ENCODE measurements at regions of chr2 and their contacts with region 1.

Region 1: DNA sequence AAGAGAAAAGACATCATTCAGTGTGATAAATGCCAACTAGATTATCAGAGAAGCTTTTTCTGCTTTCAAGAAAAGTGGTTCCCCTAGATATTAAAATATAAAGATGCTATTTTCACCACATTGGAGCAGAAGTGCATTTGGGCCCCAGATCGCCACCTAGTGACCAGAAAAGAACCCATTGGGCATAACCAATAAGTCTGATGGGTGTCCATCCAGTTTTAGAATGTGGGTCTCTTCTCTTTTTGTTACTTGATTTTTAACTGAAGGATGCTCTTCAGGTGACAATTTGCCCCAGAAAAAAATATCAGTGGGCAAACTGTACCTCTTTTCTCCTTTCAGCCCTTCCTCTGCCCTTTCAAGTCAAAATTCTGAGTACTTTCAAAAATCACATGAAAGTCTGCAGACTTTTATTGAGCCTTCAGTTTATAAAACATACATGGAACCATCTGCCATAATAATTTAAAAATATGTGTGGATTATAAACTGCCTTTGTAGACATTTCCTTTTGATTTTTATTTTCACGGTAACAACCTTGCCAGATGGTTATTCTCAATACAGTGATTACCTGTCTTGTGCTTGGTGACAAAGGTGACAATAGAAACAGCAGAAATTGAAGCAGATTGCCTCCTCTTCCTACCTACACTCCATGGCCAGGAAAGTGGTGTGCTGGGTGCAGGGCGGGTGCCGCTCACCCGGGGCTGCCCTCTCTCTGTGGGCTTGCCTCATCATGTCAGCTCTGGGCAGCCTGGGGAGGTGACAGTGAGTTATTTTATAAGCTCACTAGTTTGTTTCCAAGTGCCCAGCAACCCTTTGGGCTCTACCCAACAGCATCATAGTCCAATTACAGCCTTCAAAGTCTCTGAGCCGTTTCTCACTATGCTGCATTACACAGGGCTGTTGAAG is 124.5 kb downstream of the DCDC2C start:
- DNase-seq: peak; percentile 4
- H3K4me3 ChIP-seq: no peak overlapping the region
- H3K27ac ChIP-seq: no peak overlapping the region
- H3K27me3 ChIP-seq: no peaks in the 10 kb centered on the region
- CTCF ChIP-seq: peak; percentile 78

Region 2: DNA sequence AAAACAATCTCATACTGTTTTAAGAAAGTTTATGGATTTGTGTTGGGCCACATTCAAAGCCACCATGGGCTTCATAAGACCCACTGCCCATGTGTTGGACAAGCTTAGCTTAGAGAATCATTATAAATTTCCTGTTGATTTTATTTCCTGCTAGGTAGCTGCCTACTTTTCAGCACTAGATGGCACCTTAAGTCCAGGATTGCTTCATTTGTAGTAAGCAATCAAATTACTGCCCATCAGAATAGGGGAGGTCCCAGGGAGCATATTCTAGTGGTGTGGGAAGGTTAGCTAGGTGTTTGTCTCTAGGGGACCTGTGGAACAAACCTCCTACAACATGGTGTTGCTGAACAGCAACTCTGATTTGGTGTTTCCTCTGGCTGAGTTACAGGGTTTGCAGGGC is 135.5 kb before region 1 on chr2:
- CTCF ChIA-PET with region 1: interaction called, 22 read pairs
- POLR2A ChIA-PET with region 1: no interaction called
- DNase-seq: no peak
- H3K4me3 ChIP-seq: no peak overlapping the region
- H3K27ac ChIP-seq: no peak overlapping the region
- H3K27me3 ChIP-seq: peaks cover 6% of the 10 kb centered on the region
- CTCF ChIP-seq: peak; percentile 59

Region 3: DNA sequence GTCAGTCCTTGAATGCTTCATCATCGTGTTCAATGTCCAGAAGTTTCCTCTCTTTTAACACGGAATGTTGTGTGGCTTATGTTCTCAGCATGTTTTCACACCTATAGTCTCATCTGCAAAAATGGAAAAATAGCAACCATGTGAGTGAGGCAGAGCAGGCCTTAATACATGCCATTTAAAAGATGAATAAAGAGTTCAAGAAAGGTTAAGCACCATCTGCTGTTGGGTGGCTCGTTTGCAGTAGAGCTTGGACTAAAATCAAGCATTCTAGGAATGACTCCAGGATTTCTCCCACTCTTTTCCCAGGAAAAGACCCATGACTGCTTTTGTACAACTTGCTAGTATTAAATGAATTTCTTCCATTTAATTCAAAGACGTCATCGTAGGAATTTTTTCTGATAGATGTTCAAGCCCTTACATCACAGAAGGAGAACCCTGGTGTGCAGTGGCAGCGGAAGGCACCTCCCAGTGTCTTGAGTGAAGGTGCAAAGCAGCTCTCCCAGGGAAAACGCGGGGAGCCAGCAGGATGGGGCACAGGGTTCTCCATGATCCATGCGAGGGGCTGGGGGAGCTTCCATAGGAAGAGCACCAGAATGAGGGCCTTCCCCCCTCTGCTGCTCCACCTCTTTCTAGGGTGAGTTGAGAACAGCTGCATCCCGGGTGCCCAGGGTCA is 115.0 kb before region 1 on chr2:
- CTCF ChIA-PET with region 1: interaction called, 14 read pairs
- POLR2A ChIA-PET with region 1: no interaction called
- DNase-seq: peak; percentile 29
- H3K4me3 ChIP-seq: no peak overlapping the region
- H3K27ac ChIP-seq: no peak overlapping the region
- H3K27me3 ChIP-seq: no peaks in the 10 kb centered on the region
- CTCF ChIP-seq: no peak

Region 4: GRCh38 chr2:3738454-3738853 is 89.5 kb before region 1 on chr2:
- CTCF ChIA-PET with region 1: interaction called, 72 read pairs
- POLR2A ChIA-PET with region 1: interaction called, 4 read pairs
- DNase-seq: no peak
- H3K4me3 ChIP-seq: no peak overlapping the region
- H3K27ac ChIP-seq: no peak overlapping the region
- H3K27me3 ChIP-seq: peaks cover 13% of the 10 kb centered on the region
- CTCF ChIP-seq: peak; percentile 67

Region 5: DNA sequence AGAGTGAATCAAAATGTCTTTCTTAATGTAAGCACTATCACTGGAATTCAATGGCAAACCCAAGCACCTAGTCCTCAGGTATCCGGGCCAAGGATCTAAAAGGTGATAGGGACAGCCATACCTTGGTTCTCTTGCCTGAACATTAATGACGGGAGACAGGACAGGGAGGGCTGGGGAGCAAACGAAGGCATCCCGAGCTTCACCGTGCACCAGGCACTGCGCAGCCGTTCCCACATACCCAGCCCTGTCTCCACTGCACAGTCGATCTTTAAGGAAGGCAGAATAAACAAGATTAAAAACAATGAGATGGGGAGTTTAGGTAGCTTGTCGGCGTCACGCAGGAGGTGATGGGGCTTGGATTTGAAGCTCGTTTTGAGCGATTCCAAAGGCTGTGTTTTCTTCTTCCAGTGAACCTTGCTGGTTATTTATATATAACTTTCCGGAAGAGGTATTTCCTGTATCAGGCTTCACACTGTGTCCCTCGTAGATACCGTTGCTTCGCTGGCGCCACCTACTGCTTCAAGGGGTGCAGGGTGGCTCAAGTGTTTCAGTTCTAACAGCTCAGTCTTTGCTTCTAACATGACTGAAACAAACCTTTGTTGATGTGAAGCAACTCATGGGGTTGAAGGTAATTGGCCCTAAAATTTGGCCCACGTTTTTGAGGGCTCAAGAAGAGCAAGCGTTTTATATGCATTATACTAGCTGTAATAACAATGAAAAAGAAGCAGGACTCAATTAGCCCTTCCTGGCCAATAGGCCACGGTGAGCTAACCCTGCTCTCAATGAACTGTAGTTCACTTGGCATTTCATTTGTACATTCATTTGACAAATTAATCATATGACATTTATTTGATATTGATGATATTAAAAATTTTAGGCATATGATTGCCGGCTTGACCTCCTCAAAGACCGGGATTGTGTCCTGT is 47.2 kb before region 1 on chr2:
- CTCF ChIA-PET with region 1: interaction called, 23 read pairs
- POLR2A ChIA-PET with region 1: no interaction called
- DNase-seq: no peak
- H3K4me3 ChIP-seq: no peak overlapping the region
- H3K27ac ChIP-seq: no peak overlapping the region
- H3K27me3 ChIP-seq: no peaks in the 10 kb centered on the region
- CTCF ChIP-seq: peak; percentile 75

Region 6: DNA sequence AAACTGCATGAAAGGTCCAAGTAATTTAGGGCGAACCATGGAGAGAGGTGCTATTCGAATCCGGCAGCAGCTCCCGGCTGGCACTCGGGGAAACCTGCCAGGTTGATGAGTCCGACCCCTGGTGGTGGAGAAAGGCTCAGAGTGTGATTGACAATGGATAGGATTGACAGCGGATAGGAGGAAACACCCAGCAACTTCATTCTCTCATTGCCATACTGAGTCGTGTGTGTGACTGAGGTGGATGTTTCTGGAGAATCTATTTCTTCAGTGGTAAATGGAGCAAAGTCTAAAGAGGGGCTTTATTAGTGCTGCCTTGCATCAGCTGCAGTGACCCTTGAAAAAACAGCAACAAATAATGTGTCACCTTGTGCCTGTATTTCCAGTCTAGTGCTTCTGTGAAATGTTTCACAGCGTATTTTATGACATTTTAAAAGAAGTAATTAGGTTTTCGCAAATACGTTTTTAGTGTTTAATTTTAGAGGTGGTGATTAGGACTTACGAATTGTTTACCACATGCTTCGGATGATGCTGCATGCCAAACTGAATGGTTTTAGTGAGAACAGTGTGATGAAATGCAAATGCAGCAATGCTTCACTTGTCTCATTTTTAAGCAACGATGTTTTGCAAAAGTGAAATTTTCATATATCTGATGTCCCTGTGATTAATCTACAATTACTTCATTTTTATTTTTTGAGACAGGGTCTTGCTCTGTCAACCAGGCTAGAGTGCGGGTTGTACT is 22.6 kb before region 1 on chr2:
- CTCF ChIA-PET with region 1: interaction called, 22 read pairs
- POLR2A ChIA-PET with region 1: interaction called, 3 read pairs
- DNase-seq: no peak
- H3K4me3 ChIP-seq: no peak overlapping the region
- H3K27ac ChIP-seq: no peak overlapping the region
- H3K27me3 ChIP-seq: no peaks in the 10 kb centered on the region
- CTCF ChIP-seq: peak; percentile 38

Region 7: GRCh38 chr2:3839476-3839875 is 11.6 kb after region 1 on chr2:
- CTCF ChIA-PET with region 1: interaction called, 10 read pairs
- POLR2A ChIA-PET with region 1: no interaction called
- DNase-seq: no peak
- H3K4me3 ChIP-seq: no peak overlapping the region
- H3K27ac ChIP-seq: no peak overlapping the region
- H3K27me3 ChIP-seq: no peaks in the 10 kb centered on the region
- CTCF ChIP-seq: no peak

Region 8: DNA sequence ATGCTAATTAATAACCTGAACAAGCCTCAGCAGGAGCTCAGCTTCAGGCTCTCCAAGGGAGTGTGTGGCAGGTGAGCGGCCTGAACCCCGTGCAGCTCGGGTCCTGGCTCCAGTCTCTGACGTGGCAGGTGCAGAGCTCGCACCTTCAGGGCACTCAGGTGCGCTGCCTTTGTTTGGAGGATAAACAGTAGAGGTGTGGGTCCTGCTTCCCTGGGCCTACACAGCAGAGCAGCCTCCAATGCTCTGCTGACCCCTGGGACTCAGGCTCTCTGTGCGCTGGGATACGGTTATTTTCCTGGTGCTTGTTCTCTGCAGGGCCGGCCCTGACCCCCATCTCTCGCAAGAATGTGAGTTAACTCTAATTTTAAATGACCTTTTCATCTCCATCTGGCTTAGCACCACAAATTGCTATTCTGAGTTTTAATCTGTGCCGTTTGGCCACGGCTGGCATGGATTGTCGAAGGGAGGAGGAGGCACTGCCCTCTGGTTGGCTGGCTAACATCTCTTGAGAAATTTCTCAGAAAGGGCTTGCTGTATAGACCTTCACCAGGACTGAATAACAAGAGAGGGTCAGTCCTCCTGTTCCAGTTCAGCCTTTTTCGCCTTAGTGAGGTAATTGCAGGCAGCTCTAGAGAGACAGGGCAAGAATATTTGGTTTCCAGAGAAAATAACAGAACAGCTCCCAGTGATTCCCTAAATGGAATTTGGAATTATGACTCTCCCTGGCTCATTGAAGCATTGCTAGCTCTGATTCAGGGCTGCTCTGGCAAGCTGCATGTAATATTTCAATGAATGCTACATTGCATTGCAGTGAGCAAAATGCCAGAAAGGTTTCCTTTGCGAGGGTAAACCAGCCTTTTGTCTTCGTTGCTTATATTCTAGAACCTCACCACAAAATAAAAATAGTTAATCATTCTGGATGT is 37.3 kb after region 1 on chr2:
- CTCF ChIA-PET with region 1: no interaction called
- POLR2A ChIA-PET with region 1: no interaction called
- DNase-seq: no peak
- H3K4me3 ChIP-seq: no peak overlapping the region
- H3K27ac ChIP-seq: no peak overlapping the region
- H3K27me3 ChIP-seq: no peaks in the 10 kb centered on the region
- CTCF ChIP-seq: no peak

Measured in AG04450 (cell line).